MCF 10A (cell line): ENCODE measurements at regions of chr2 and their contacts with region 1.

Region 1: DNA sequence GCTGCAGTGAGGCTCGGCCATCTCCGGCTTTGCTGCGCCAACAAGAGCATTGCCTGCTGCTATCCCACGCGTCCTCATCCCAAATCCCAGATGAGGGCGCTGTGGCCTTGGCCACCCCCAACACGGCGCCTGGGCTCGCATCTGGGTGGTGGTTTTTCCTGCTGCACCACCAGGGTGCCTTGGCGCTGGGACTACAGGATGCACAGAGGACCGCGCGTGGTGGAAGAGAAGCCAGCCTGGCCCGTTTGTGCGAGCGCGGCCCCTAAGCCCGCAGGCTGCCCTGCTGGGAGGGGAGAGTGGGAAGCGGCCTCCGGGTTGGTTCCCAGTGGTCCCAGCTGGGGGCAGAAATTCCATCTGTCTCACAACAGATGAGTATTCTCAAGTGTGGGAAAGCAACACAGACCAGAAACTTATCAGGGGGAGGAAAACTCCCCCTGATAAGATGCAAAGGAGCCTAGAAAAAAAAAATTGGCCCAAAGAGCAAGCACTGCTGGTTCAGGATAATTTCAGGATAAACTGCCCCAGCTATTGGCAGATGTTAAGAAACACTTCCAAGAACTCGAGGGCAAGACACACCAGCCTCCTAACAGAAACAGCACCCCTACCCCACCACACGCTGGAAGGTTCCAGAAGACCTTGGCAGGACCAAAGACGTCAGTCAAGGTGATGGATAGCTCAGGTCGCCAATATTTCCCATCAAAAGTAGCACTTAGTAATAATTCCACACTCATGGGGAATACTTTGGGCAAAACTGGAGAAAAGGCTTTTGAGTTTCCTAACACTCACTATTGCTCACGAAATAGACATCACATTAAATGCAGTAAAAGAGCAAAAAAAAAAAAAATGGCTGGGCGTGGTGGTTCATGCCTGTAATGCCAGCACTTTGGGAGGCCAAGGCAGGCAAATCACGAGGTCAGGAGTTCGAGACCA is 152.1 kb downstream of the PXDN start:
- DNase-seq: peak; percentile 45
- H3K4me3 Mint-ChIP-seq: no peak overlapping the region
- H3K27ac Mint-ChIP-seq: no peak overlapping the region
- H3K4me1 Mint-ChIP-seq: peaks cover 15% of the 10 kb centered on the region
- H3K27me3 Mint-ChIP-seq: no peaks in the 10 kb centered on the region
- CTCF ChIP-seq: no peak

Region 2: GRCh38 chr2:1414121-1414520 is 178.1 kb before region 1 on chr2:
- CTCF ChIA-PET with region 1: no interaction called
- POLR2A ChIA-PET with region 1: no interaction called
- intact Hi-C with region 1: no loop called
- DNase-seq: no peak
- H3K4me3 Mint-ChIP-seq: no peak overlapping the region
- H3K27ac Mint-ChIP-seq: no peak overlapping the region
- H3K4me1 Mint-ChIP-seq: no peaks in the 10 kb centered on the region
- H3K27me3 Mint-ChIP-seq: no peaks in the 10 kb centered on the region
- CTCF ChIP-seq: no peak

Region 3: GRCh38 chr2:1750933-1751766 is 158.9 kb after region 1 on chr2:
- CTCF ChIA-PET with region 1: no interaction called
- POLR2A ChIA-PET with region 1: no interaction called
- intact Hi-C with region 1: loop called (anchors 5 kb)
- DNase-seq: peak; percentile 74
- H3K4me3 Mint-ChIP-seq: no peak overlapping the region
- H3K27ac Mint-ChIP-seq: no peak overlapping the region
- H3K4me1 Mint-ChIP-seq: peaks cover 13% of the 10 kb centered on the region
- H3K27me3 Mint-ChIP-seq: no peaks in the 10 kb centered on the region
- CTCF ChIP-seq: peak; percentile 88